Panc1 (cell line): ENCODE measurements at regions of chr10 and their contacts with region 1.

Region 1: GRCh38 chr10:89391917-89392756 is at the start of gene IFIT1:
- DNase-seq: no peak
- ATAC-seq: peak; percentile 94
- H3K4me3 ChIP-seq: peak within 1 kb of the TSS; percentile 49 to 91
- H3K27ac ChIP-seq: peak within 1 kb of the TSS; percentile 82
- H3K4me1 ChIP-seq: peaks cover 30% of the 10 kb centered on the region
- H3K27me3 ChIP-seq: no peaks in the 10 kb centered on the region
- CTCF ChIP-seq: peak; percentile 25; the same call in 1 of the 2 replicates
- total RNA-seq, gene IFIT1: 43.8 TPM

Region 2: DNA sequence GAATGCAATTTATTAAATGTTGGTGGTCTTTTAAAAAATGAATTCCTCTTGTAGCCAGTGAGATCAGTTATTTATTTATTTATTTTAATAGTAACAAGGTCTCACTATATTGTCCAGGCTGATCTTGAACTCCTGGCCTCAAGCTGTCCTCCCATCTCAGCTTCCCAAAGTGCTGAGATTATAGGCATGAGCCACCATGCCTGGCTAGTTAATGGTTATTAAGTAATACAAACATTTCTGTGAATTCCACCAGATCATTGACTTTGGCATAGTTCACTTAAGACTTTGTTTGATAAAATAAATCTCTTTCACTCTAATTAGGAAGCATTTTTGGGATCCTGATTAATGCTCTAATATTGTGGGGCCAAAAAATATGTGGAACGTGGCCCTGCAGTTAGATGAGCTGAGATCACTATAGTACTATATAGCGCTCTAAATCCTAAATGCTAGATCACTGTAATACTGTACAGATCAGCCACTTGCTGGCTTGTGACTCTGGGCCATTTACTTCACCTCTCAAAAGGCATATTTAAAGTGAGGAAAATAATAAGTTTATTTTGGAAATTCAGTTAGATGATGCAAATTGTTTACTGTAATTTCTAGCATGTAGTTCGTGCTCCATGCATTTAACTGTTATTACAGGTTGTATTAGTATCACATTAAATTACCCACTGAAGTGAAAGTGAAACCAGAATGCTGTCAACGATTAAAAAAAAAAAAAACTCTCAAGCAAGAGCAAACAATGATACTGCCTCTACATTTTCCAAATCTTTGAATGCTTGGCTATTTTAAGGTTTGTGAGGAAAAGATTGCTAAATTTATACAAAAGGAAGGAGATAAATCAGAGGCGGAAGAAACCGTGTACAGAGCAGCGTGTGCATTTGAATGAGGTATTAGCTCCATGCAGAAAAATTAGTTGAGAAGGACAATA is 417.4 kb before region 1 on chr10:
- CTCF ChIA-PET with region 1: interaction called, 18 read pairs
- POLR2A ChIA-PET with region 1: no interaction called
- in situ Hi-C with region 1: no loop called
- intact Hi-C with region 1: no loop called
- DNase-seq: no peak
- ATAC-seq: peak; percentile 88
- H3K4me3 ChIP-seq: peak overlapping the region; percentile 66 to 82
- H3K27ac ChIP-seq: peak overlapping the region; percentile 95
- H3K4me1 ChIP-seq: peaks cover 10% of the 10 kb centered on the region; the same call in 1 of the 2 replicates
- H3K27me3 ChIP-seq: no peaks in the 10 kb centered on the region
- CTCF ChIP-seq: no peak

Region 3: DNA sequence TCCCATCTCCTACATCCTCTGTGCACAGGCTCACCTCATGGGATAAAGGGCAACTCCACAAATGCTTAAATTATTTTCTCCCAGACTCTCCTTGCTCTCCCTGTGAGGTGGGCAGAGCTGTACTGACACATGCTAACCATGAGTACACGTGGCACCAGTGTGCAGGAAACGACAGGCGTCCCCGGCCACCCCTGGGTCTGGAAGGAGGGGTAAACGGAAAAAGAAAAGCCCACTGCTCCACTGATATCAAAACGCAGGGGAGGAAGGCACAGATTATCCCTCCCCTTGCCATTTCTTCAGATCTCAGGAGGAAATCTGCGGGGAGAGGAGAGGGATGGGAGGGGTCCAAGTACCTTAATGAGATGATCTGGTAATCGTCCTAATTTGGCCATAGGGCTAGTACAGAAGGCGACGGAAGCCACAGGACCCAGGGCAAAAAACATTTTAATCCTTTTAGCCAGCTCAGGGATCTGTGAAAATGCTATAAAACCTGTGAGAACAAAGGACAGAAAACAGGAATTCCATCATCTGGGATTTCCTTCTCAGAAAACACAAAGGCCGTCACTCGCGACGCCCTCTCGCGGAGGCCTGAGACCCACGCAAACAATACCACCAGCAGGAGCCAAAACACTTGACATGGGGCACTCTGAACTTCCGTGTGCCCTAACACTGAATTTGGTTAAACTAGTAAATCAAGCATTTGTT is 167.2 kb before region 1 on chr10:
- CTCF ChIA-PET with region 1: no interaction called
- POLR2A ChIA-PET with region 1: no interaction called
- in situ Hi-C with region 1: no loop called
- intact Hi-C with region 1: no loop called
- DNase-seq: no peak
- ATAC-seq: no peak
- H3K4me3 ChIP-seq: no peak overlapping the region
- H3K27ac ChIP-seq: no peak overlapping the region
- H3K4me1 ChIP-seq: no peaks in the 10 kb centered on the region
- H3K27me3 ChIP-seq: no peaks in the 10 kb centered on the region
- CTCF ChIP-seq: no peak

Region 4: DNA sequence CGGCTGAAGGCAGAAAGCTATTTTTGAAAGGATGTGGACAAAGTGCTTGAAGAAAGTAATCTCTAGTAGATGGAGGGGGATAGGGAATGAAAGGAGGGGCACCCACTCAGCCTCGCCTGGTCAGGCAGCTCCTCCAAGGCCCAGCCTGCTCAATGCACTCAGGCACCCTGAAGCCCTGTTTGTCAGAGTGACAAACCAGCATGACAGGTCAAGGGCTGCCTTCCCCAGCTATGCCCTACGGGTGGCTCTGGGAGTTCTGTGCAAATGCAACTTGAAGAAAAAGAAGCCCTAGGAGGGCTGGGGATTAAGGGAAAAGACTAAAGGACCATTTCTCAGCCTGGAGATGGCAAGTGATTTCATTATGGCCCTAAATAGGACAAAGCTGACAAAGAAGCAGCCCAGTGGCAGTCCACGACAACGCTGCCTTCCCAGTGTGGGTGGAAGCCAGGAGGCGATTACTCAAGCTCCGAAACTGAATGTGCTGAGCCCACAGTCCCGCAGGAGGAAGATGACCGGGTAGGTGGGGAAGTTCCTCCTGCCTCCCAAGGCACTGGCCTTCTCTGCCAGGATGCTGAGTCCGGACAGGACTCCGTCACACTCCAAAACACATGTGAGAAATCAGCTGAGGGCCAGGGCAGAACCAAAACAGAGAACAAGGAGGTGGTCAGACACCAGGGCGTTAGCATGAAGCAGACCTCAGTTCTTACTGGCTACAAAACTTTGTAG is 156.9 kb before region 1 on chr10:
- CTCF ChIA-PET with region 1: interaction called, 10 read pairs
- POLR2A ChIA-PET with region 1: interaction called, 7 read pairs
- in situ Hi-C with region 1: no loop called
- intact Hi-C with region 1: no loop called
- DNase-seq: no peak
- ATAC-seq: no peak
- H3K4me3 ChIP-seq: no peak overlapping the region
- H3K27ac ChIP-seq: no peak overlapping the region
- H3K4me1 ChIP-seq: no peaks in the 10 kb centered on the region
- H3K27me3 ChIP-seq: no peaks in the 10 kb centered on the region
- CTCF ChIP-seq: no peak